ENCODE measurements at regions of chr17 and their contacts with region 1.

Region 1: GRCh38 chr17:39903158-39903884 is 15.1 kb downstream of the GSDMB start:
- DNase-seq: peak; percentile 66
- H3K4me3 Mint-ChIP-seq: no peak overlapping the region
- H3K27ac Mint-ChIP-seq: no peak overlapping the region
- H3K4me1 Mint-ChIP-seq: peaks cover 12% of the 10 kb centered on the region
- H3K27me3 Mint-ChIP-seq: no peaks in the 10 kb centered on the region
- CTCF ChIP-seq: no peak

Region 2: GRCh38 chr17:39605492-39606433 is 297.6 kb before region 1 on chr17:
- CTCF ChIA-PET with region 1: interaction called, 4,313 read pairs
- intact Hi-C with region 1: no loop called
- DNase-seq: peak; percentile 97
- H3K4me3 Mint-ChIP-seq: peak overlapping the region; percentile 61
- H3K27ac Mint-ChIP-seq: no peak overlapping the region
- H3K4me1 Mint-ChIP-seq: peaks cover 46% of the 10 kb centered on the region
- H3K27me3 Mint-ChIP-seq: peaks cover 100% of the 10 kb centered on the region
- CTCF ChIP-seq: no peak

Region 3: DNA sequence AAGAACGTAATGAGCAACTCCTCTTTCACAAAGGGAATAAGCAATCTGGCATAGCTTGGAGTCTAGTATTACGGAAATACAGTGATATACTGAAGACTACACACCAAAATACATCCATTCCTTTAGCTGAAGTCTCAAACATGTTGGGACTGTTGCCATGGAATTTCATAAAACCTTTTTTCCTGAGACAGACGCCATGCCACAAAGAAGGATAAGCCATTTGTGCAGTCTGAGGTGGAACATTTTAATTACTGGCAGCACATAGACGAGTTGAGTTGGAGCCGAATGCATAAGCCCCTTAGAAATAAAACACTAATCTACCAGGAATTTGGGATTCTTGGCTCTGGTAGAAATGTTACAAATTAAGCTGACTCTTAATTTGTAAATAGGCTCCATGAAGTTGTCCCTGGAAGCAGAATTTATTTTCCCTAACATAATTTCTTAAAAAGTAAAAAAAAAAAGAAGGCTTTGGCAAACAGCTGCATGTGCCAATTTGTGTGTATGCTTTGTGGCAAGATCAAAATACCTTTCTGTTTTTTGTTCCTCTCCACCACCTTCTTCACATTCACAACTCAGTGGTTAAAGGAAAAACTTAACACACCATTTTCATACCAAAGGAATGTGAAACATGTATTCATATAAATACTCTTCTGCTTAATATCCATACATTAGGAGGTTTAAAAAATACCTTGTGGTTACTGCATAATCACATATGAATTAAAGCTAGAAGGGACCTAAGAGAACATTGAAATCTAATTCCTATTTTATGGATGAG is 140.1 kb before region 1 on chr17:
- CTCF ChIA-PET with region 1: interaction called, 138 read pairs
- intact Hi-C with region 1: no loop called
- DNase-seq: no peak
- H3K4me3 Mint-ChIP-seq: no peak overlapping the region
- H3K27ac Mint-ChIP-seq: no peak overlapping the region
- H3K4me1 Mint-ChIP-seq: peaks cover 12% of the 10 kb centered on the region
- H3K27me3 Mint-ChIP-seq: peaks cover 26% of the 10 kb centered on the region
- CTCF ChIP-seq: no peak

Region 4: DNA sequence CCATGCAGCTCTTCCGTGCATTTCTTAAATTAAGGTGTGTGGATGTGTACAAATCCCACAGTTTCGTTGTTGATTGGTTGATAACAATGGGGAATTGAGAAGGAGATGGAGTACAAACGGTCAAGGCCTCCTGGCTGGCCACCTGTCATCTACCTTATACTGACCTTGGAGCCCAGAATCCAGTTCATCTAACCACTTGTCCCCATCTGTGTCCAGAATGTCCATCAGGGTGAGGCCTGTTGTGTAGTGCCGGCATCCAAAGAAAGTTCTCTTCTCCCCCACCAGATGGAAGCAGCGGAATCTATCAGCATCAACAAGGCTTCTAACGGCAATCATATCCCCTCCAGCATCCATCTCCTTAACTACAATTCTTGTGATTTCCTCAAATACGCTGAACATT is 13.6 kb after region 1 on chr17:
- CTCF ChIA-PET with region 1: interaction called, 4,357 read pairs
- intact Hi-C with region 1: loop called (anchors 1 kb)
- DNase-seq: peak; percentile 94
- H3K4me3 Mint-ChIP-seq: no peak overlapping the region
- H3K27ac Mint-ChIP-seq: no peak overlapping the region
- H3K4me1 Mint-ChIP-seq: peaks cover 24% of the 10 kb centered on the region
- H3K27me3 Mint-ChIP-seq: no peaks in the 10 kb centered on the region
- CTCF ChIP-seq: no peak

Region 5: DNA sequence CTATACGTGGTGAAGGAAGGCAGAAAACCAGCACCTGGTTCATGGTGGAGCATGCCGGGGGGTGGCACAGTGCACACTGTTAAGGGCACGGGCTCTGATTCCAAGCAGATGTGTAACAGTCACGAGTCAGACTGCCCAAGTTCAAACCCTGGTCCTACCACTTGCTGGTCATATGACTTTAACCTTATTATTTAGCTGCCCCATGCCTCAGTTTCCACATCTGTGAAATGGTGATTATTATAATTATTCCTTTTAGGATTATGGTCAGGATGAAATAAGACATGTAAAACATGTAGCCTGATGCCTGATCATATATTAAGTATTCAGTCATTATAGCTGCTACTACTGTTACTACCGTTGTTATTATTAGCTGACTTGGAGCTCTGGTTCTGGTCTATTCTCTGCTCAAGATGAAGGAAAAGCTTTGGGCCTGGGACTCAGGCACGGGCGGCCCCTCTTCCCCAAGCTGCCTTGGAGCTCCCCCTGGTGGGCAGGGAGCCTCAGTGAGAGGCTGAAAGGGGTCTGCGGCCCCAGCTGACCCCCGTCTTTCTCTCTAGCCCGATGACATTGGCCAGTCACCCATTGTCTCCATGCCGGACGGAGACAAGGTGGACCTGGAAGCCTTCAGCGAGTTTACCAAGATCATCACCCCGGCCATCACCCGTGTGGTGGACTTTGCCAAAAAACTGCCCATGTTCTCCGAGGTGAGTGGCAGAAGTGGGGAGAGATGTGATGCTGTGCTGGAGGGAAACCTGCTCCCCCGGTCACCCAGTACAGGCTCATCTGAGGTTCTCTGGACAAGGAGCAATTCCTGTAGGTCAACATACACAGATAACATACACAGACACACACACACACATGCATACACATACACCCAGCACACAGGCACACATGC is 183.1 kb after region 1 on chr17:
- CTCF ChIA-PET with region 1: no interaction called
- intact Hi-C with region 1: no loop called
- DNase-seq: peak; percentile 100
- H3K4me3 Mint-ChIP-seq: no peak overlapping the region
- H3K27ac Mint-ChIP-seq: no peak overlapping the region
- H3K4me1 Mint-ChIP-seq: no peaks in the 10 kb centered on the region
- H3K27me3 Mint-ChIP-seq: no peaks in the 10 kb centered on the region
- CTCF ChIP-seq: no peak

Region 6: DNA sequence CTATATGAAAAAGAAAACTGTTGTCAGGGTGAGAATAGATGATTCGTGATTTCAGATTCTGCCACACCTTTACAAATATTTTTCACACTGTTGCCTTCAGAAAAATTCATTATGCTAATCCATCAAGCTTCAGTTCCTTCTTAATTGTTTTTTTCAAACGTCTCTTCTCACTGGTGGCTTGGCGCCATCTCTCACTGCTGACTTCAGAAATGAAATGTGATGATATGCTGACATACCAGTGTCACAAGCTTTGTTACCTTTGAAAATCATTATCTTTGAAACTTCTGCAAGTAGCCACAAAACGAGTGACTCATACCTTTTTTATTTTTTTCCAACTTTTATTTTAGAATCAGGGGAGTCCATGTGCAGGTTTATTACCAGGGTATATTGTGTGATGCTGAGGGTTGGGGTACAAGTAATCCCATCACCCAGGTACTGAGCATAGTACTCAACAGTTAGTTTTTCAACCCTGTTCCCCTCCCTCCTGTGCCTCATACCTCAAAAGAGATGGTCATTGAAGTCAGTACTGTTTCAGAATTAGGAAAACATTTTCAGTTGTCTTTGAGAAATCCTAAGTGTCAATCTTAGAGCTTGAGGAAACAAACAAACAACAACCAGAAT is 775.7 kb after region 1 on chr17:
- CTCF ChIA-PET with region 1: no interaction called
- intact Hi-C with region 1: loop called (anchors 10 kb)
- DNase-seq: no peak
- H3K4me3 Mint-ChIP-seq: no peak overlapping the region
- H3K27ac Mint-ChIP-seq: no peak overlapping the region
- H3K4me1 Mint-ChIP-seq: peaks cover 6% of the 10 kb centered on the region
- H3K27me3 Mint-ChIP-seq: peaks cover 85% of the 10 kb centered on the region
- CTCF ChIP-seq: no peak

Measured in Calu3 (cell line).